ENCODE measurements at regions of chr18 and their contacts with region 1.

Region 1: DNA sequence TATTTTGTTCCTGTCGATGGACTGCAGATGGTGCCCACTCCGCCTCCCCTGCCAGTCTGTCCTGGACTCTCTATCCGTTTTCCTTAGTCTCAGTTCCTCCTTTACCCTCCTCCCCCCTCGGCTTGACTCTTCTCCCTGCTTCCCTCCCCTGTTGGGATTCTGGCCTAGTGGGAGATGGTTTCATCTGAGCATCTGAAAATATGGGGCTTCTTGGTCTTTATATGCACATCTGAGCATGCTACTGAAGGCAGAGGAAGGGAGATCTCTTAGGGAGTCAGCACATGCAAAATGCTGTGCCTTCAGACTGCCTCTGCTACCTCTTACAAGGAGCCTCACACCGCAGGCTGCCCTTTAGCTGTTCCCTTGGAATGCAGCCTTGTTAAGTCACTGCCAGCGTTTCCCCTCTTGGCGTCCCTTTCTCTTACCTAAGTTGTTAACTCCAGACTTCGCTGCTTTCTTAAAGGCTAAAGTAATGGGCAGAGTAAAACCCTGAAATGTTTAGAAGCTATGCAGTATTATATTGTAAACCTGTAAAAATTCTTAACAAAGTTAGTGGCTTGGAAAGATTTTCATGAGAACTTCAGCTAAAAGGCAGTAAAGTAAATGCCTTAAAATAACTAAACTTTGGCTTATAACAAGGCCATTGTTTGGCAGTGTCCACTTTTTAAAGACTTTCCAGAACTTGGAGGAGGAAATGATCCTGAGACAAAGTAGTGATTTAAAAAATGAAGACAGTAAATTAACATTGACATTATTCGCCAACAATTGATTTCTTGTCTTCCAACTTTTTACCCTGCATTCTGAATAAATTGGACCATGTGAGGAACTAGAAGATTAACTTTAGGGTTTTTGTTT is 49.8 kb downstream of the LDLRAD4 start:
- DNase-seq: no peak
- ATAC-seq: peak in 1 of 2 donors; percentile 28
- H3K4me3 ChIP-seq: no peak overlapping the region
- H3K27ac ChIP-seq: peak overlapping the region; percentile 75
- H3K4me1 ChIP-seq: peaks cover 29% of the 10 kb centered on the region
- H3K27me3 ChIP-seq: no peaks in the 10 kb centered on the region

Region 2: DNA sequence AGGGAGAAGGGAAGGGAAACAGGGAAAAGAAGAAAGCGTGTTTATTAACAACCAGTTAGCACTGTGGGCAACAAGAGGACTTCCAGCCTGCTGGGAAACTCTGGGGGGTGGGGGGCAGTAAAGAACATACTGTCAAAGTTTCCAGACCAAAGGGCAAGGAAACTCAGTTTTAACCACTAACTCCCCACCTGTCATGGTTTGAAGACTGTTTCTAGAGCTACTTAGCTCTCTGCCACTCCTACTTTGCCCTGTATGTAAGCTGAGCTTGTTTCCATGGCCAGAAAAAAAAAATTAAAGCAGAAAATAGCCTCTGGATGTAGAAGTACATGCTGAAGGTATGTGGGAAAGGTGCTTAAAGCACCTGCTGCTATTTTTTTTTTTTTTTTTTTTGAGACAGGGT is 373.4 kb before region 1 on chr18:
- intact Hi-C with region 1: no loop called
- DNase-seq: no peak
- ATAC-seq: no peak
- H3K4me3 ChIP-seq: no peak overlapping the region
- H3K27ac ChIP-seq: no peak overlapping the region
- H3K4me1 ChIP-seq: no peaks in the 10 kb centered on the region
- H3K27me3 ChIP-seq: no peaks in the 10 kb centered on the region

Region 3: DNA sequence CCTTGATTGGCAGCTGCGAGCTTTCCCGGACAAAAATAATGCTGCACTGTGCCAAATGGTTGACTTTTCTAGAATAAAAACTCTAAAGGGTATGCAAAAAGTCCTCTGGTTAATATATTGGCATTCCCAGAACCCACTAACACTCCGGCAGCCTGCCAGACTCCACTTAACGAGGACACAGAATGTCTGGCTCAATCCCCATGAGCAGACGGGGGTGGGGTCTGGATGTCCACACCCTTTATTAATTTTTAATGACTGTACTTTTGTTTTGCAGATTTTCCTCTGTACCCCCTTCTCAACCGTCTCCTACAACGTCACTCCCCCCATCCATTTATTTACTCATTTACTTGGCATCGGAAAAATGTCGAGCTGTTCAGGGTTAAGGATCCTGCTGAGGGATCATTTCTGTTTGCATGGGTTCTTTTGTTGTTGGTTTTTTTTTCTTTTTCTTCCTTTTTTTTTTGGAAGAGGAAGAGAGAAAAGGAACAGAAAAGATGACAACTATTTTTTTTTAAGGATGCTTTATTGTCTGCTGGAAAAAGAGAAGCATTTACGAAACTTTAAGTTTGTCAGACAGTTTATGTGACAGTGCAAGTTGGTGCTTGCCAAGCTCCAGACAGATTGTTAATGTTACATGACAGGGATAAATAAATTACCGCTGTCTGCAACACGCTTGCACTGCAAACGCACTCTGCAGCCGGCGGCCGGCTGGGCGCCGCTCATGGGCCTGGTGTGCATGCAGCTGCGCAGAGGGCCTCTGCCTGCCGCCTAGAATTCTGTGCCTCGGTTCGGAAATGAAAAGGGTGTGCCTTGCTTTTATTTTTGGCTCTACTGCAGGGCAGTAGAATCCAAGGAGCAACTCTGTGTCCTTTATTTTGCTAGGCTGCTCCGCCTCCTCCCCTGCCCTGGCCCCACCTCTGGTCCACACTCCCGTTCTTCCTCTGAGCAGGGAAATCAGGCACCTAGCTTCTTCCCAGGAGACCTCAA is 46.2 kb before region 1 on chr18:
- intact Hi-C with region 1: loop called (anchors 5 to 10 kb)
- DNase-seq: peak; percentile 83 to 94 (median 92)
- ATAC-seq: peak; percentile 74 to 83
- H3K4me3 ChIP-seq: peak overlapping the region; percentile 27
- H3K27ac ChIP-seq: peak overlapping the region; percentile 86
- H3K4me1 ChIP-seq: peaks cover 26% of the 10 kb centered on the region
- H3K27me3 ChIP-seq: no peaks in the 10 kb centered on the region

Region 4: GRCh38 chr18:13232086-13232917 is 36.1 kb before region 1 on chr18:
- intact Hi-C with region 1: loop called in 2 of 4 experiments (anchors 5 to 10 kb)
- DNase-seq: peak; percentile 74 to 88 (median 86)
- ATAC-seq: peak; percentile 74 to 78
- H3K4me3 ChIP-seq: no peak overlapping the region
- H3K27ac ChIP-seq: no peak overlapping the region
- H3K4me1 ChIP-seq: peaks cover 7% of the 10 kb centered on the region
- H3K27me3 ChIP-seq: no peaks in the 10 kb centered on the region

Region 5: GRCh38 chr18:13328208-13328607 is 59.8 kb after region 1 on chr18:
- intact Hi-C with region 1: no loop called
- DNase-seq: no peak
- ATAC-seq: no peak
- H3K4me3 ChIP-seq: no peak overlapping the region
- H3K27ac ChIP-seq: no peak overlapping the region
- H3K4me1 ChIP-seq: no peaks in the 10 kb centered on the region
- H3K27me3 ChIP-seq: no peaks in the 10 kb centered on the region

Region 6: GRCh38 chr18:13500227-13500865 is 232.0 kb after region 1 on chr18:
- intact Hi-C with region 1: loop called in 1 of 4 experiments (anchors 10 kb)
- DNase-seq: peak; percentile 63 to 80 (median 75)
- ATAC-seq: peak; percentile 87
- H3K4me3 ChIP-seq: no peak overlapping the region
- H3K27ac ChIP-seq: peak overlapping the region; percentile 78
- H3K4me1 ChIP-seq: peaks cover 5% of the 10 kb centered on the region
- H3K27me3 ChIP-seq: no peaks in the 10 kb centered on the region